CD4-positive, alpha-beta memory T cell (primary cell): ENCODE measurements at regions of chr16 and their contacts with region 1.

Region 1: GRCh38 chr16:22353191-22353919 is 21.1 kb downstream of the CDR2 start:
- DNase-seq: peak in 2 of 5 donors; percentile 15 to 60
- H3K4me3 ChIP-seq: no peak overlapping the region
- H3K4me3 Mint-ChIP-seq: peak overlapping the region in 6 of 8 donors; percentile 2 to 74 (median 36)
- H3K27ac ChIP-seq: peak overlapping the region; percentile 20
- H3K27ac Mint-ChIP-seq: peak overlapping the region; percentile 60 to 92 (median 80)
- H3K4me1 ChIP-seq: peaks cover 61% of the 10 kb centered on the region
- H3K4me1 Mint-ChIP-seq: peaks cover 39 to 67% (median 52%) of the 10 kb centered on the region in 4 donors
- H3K27me3 ChIP-seq: no peaks in the 10 kb centered on the region
- H3K27me3 Mint-ChIP-seq: no peaks in the 10 kb centered on the region

Region 2: GRCh38 chr16:22284637-22285036 is 68.7 kb before region 1 on chr16:
- CTCF ChIA-PET with region 1: no interaction called
- POLR2A ChIA-PET with region 1: no interaction called
- intact Hi-C with region 1: no loop called
- DNase-seq: no peak
- H3K4me3 ChIP-seq: no peak overlapping the region
- H3K4me3 Mint-ChIP-seq: no peak overlapping the region
- H3K27ac ChIP-seq: no peak overlapping the region
- H3K27ac Mint-ChIP-seq: no peak overlapping the region
- H3K4me1 ChIP-seq: no peaks in the 10 kb centered on the region
- H3K4me1 Mint-ChIP-seq: no peaks in the 10 kb centered on the region
- H3K27me3 ChIP-seq: no peaks in the 10 kb centered on the region
- H3K27me3 Mint-ChIP-seq: no peaks in the 10 kb centered on the region

Region 3: DNA sequence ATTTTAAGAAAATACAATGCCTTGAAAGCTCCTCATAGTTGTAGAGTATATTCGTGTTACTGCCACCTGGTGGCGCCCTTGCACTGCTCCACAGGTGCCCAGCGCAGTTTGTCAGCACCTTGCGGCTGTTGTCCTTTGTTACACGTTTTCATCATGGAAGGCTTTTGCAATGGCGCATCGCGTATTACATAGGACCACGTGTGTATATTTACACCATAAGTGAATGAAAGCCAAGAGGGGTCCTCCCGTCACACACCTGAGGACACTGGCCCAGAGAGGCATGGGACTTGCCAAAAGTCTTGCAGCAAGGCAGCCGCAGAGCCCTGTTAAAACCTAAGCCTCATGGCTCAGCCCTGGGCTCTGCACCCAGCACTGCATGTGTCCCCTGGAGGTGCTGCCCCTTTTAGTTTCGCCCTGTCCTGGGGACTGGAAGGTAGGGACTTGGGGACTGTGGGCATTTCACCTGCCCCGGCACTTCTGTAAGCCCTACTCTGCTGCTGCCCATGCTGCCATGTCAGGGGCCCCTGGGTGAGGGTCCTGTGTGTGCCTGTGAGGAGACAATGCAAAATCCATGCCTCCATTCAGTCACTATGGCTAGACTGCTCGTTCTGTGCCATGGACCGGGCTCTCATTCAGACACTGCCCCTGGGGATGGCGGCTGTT is 31.9 kb before region 1 on chr16:
- CTCF ChIA-PET with region 1: interaction called, 11 read pairs
- POLR2A ChIA-PET with region 1: interaction called, 8 read pairs
- intact Hi-C with region 1: loop called (anchors 2 kb)
- DNase-seq: peak; percentile 73 to 78 (median 74)
- H3K4me3 ChIP-seq: no peak overlapping the region
- H3K4me3 Mint-ChIP-seq: peak overlapping the region in 3 of 8 donors; percentile 22 to 62 (median 26)
- H3K27ac ChIP-seq: no peak overlapping the region
- H3K27ac Mint-ChIP-seq: peak overlapping the region in 6 of 7 donors; percentile 58 to 92 (median 74)
- H3K4me1 ChIP-seq: peaks cover 5% of the 10 kb centered on the region
- H3K4me1 Mint-ChIP-seq: peaks cover 4 to 10% (median 6%) of the 10 kb centered on the region in 4 donors
- H3K27me3 ChIP-seq: no peaks in the 10 kb centered on the region
- H3K27me3 Mint-ChIP-seq: no peaks in the 10 kb centered on the region

Region 4: DNA sequence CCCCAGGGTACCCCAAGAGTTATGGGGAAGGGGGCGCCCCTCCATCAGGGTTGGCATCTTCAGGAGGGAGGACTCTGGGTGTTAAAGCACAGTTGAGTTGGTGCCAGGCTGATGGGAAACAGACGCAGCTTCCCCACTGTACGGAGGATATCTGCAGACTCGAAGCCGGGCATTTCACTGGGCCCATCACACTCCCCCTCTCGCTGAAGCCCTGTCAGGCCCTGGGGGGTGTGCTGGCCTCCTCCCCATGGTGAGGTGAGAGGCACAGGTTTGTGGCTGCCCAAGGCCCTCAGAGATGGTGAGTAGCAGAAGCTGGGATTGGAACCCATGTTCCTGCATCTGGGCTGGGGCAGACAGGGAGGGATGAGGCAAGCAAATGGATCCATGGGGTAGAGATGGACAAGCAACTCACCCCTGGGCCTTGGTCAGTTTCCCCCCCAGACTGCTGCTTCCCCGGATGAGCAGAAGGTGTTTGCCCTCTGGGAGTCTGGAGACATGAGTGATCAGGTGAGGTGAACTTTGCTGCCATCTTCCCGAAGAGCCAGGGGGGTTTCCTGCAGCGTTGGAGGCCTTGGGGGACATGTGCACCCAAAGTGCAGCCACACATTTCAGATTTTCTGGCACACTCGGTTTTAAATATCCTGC is 25.2 kb before region 1 on chr16:
- CTCF ChIA-PET with region 1: interaction called, 3 read pairs
- POLR2A ChIA-PET with region 1: interaction called, 14 read pairs
- intact Hi-C with region 1: no loop called
- DNase-seq: no peak
- H3K4me3 ChIP-seq: no peak overlapping the region
- H3K4me3 Mint-ChIP-seq: no peak overlapping the region
- H3K27ac ChIP-seq: no peak overlapping the region
- H3K27ac Mint-ChIP-seq: peak overlapping the region in 3 of 7 donors; percentile 10 to 72 (median 50)
- H3K4me1 ChIP-seq: peaks cover 3% of the 10 kb centered on the region
- H3K4me1 Mint-ChIP-seq: peaks cover 8 to 26% (median 12%) of the 10 kb centered on the region in 4 donors
- H3K27me3 ChIP-seq: no peaks in the 10 kb centered on the region
- H3K27me3 Mint-ChIP-seq: no peaks in the 10 kb centered on the region

Region 5: GRCh38 chr16:22333457-22333994 is 19.8 kb before region 1 on chr16:
- CTCF ChIA-PET with region 1: no interaction called
- POLR2A ChIA-PET with region 1: interaction called, 16 read pairs
- intact Hi-C with region 1: no loop called
- DNase-seq: no peak
- H3K4me3 ChIP-seq: no peak overlapping the region
- H3K4me3 Mint-ChIP-seq: no peak overlapping the region
- H3K27ac ChIP-seq: no peak overlapping the region
- H3K27ac Mint-ChIP-seq: peak overlapping the region in 3 of 7 donors; percentile 41 to 74 (median 57)
- H3K4me1 ChIP-seq: no peaks in the 10 kb centered on the region
- H3K4me1 Mint-ChIP-seq: peaks cover 14 to 28% (median 19%) of the 10 kb centered on the region in 4 donors
- H3K27me3 ChIP-seq: no peaks in the 10 kb centered on the region
- H3K27me3 Mint-ChIP-seq: no peaks in the 10 kb centered on the region

Region 6: GRCh38 chr16:22340945-22341344 is 12.4 kb before region 1 on chr16:
- CTCF ChIA-PET with region 1: interaction called, 4 read pairs
- POLR2A ChIA-PET with region 1: interaction called, 16 read pairs
- intact Hi-C with region 1: no loop called
- DNase-seq: no peak
- H3K4me3 ChIP-seq: no peak overlapping the region
- H3K4me3 Mint-ChIP-seq: no peak overlapping the region
- H3K27ac ChIP-seq: no peak overlapping the region
- H3K27ac Mint-ChIP-seq: no peak overlapping the region
- H3K4me1 ChIP-seq: peaks cover 14% of the 10 kb centered on the region
- H3K4me1 Mint-ChIP-seq: peaks cover 9 to 25% (median 15%) of the 10 kb centered on the region in 4 donors
- H3K27me3 ChIP-seq: no peaks in the 10 kb centered on the region
- H3K27me3 Mint-ChIP-seq: no peaks in the 10 kb centered on the region